ENCODE measurements at regions of chr4 and their contacts with region 1.

Region 1: GRCh38 chr4:54525602-54526001 is 132.2 kb upstream of the KIT start:
- DNase-seq: peak; percentile 88
- H3K4me3 ChIP-seq: no peak overlapping the region
- H3K27ac ChIP-seq: no peak overlapping the region
- H3K4me1 ChIP-seq: peaks cover 12% of the 10 kb centered on the region
- H3K27me3 ChIP-seq: no peaks in the 10 kb centered on the region
- CTCF ChIP-seq: no peak

Region 2: GRCh38 chr4:54539500-54540029 is 14.0 kb after region 1 on chr4:
- CTCF ChIA-PET with region 1: no interaction called
- dilution Hi-C with region 1: no loop called
- in situ Hi-C with region 1: no loop called
- intact Hi-C with region 1: loop called (anchors 2 kb)
- DNase-seq: no peak
- H3K4me3 ChIP-seq: peak overlapping the region in 2 of 3 experiments; percentile 17 to 38
- H3K27ac ChIP-seq: no peak overlapping the region
- H3K4me1 ChIP-seq: no peaks in the 10 kb centered on the region
- H3K27me3 ChIP-seq: no peaks in the 10 kb centered on the region
- CTCF ChIP-seq: no peak